Activated CD4-positive, alpha-beta memory T cell treated with anti-CD3 and anti-CD28 coated beads for 36 hours (primary cell): ENCODE measurements at regions of chr1 and their contacts with region 1.

Region 1: GRCh38 chr1:205750138-205751035 is at the start of gene NUCKS1:
- DNase-seq: peak; percentile 98
- H3K4me3 Mint-ChIP-seq: peak within 1 kb of the TSS; percentile 93
- H3K27ac Mint-ChIP-seq: peak within 1 kb of the TSS; percentile 99
- H3K4me1 Mint-ChIP-seq: peaks cover 30% of the 10 kb centered on the region
- H3K27me3 Mint-ChIP-seq: peaks cover 1% of the 10 kb centered on the region
- total RNA-seq, gene NUCKS1: 149 to 202 TPM

Region 2: DNA sequence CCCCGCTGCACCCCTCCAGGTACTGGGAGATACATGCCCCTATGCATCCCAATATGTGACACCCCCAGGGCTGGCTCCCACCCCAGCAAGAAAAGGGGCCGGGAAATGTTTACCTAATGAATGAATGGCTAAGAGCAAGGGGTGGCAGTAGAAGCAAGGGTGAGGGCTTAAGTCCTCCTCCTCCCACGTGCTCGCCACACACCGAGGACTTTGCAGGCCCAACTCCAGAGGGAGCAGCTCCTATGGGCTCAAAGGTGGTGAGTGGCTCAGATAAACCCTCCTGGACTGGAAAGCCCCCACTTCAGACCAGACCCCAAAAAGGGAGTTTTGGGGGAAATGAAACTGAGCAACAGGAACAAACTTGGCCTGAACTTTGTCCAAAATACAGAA is 81.4 kb before region 1 on chr1:
- CTCF ChIA-PET with region 1: no interaction called
- POLR2A ChIA-PET with region 1: no interaction called
- intact Hi-C with region 1: no loop called
- DNase-seq: no peak
- H3K4me3 Mint-ChIP-seq: no peak overlapping the region
- H3K27ac Mint-ChIP-seq: no peak overlapping the region
- H3K4me1 Mint-ChIP-seq: peaks cover 3% of the 10 kb centered on the region
- H3K27me3 Mint-ChIP-seq: peaks cover 14% of the 10 kb centered on the region

Region 3: GRCh38 chr1:205711104-205712020 is 39.0 kb before region 1 on chr1:
- CTCF ChIA-PET with region 1: interaction called, 10 read pairs
- POLR2A ChIA-PET with region 1: interaction called, 4 read pairs
- intact Hi-C with region 1: loop called (anchors 2 kb)
- DNase-seq: peak; percentile 57
- H3K4me3 Mint-ChIP-seq: no peak overlapping the region
- H3K27ac Mint-ChIP-seq: peak overlapping the region; percentile 50
- H3K4me1 Mint-ChIP-seq: peaks cover 9% of the 10 kb centered on the region
- H3K27me3 Mint-ChIP-seq: no peaks in the 10 kb centered on the region

Region 4: GRCh38 chr1:205719762-205720161 is 30.6 kb before region 1 on chr1:
- CTCF ChIA-PET with region 1: no interaction called
- POLR2A ChIA-PET with region 1: interaction called, 3 read pairs
- intact Hi-C with region 1: loop called (anchors 2 kb)
- DNase-seq: no peak
- H3K4me3 Mint-ChIP-seq: no peak overlapping the region
- H3K27ac Mint-ChIP-seq: peak overlapping the region; percentile 86
- H3K4me1 Mint-ChIP-seq: peaks cover 30% of the 10 kb centered on the region
- H3K27me3 Mint-ChIP-seq: no peaks in the 10 kb centered on the region

Region 5: GRCh38 chr1:205812878-205813754 is 62.7 kb after region 1 on chr1 and contains the start of gene SLC41A1:
- CTCF ChIA-PET with region 1: no interaction called
- POLR2A ChIA-PET with region 1: interaction called, 3 read pairs
- intact Hi-C with region 1: loop called (anchors 1 kb)
- DNase-seq: peak; percentile 94
- H3K4me3 Mint-ChIP-seq: peak within 1 kb of the TSS; percentile 89
- H3K27ac Mint-ChIP-seq: peak within 1 kb of the TSS; percentile 80
- H3K4me1 Mint-ChIP-seq: peaks cover 52% of the 10 kb centered on the region
- H3K27me3 Mint-ChIP-seq: no peaks in the 10 kb centered on the region
- total RNA-seq, gene SLC41A1: 34.9 to 35.0 TPM